ENCODE measurements at regions of chr14 and their contacts with region 1.

Region 1: DNA sequence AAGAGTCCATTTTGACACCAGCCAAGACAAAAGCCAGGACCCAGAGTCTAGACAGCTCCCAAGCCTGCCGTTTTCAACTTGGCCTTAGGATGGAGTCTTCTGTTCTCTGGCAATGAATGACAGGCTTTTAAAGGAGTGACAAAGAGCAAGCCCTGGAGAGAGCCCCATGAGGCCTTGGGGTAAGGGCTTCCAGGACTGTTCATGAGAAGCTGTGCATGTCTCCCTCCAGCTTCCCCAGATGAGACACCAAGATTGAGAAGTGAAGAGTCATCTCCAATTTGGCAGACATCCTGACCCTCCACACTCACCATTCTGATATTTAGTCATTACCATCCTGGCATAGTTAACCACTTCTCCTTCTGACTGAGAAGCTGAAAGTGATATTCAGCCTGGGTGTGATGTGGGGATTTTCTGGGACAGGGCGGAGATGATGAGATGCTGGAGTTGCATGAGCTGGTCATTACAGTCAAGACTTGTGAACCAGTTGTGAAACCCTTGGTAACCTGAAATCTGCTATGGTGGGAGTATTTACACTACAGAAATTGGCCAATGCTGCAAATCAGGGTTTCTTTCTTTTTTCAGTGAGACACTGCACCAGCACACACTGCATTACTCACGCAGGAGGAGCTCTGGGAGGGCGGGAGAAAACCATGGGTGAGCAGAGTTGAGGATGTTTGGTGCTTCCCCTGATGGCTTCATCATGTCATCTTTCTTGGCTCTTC is 77.8 kb downstream of the VCPKMT start:
- DNase-seq: peak; percentile 100
- H3K4me3 ChIP-seq: no peak overlapping the region
- H3K27ac ChIP-seq: peak overlapping the region; percentile 97
- H3K4me1 ChIP-seq: peaks cover 58% of the 10 kb centered on the region
- H3K27me3 ChIP-seq: no peaks in the 10 kb centered on the region
- CTCF ChIP-seq: peak; percentile 8 to 16

Region 2: DNA sequence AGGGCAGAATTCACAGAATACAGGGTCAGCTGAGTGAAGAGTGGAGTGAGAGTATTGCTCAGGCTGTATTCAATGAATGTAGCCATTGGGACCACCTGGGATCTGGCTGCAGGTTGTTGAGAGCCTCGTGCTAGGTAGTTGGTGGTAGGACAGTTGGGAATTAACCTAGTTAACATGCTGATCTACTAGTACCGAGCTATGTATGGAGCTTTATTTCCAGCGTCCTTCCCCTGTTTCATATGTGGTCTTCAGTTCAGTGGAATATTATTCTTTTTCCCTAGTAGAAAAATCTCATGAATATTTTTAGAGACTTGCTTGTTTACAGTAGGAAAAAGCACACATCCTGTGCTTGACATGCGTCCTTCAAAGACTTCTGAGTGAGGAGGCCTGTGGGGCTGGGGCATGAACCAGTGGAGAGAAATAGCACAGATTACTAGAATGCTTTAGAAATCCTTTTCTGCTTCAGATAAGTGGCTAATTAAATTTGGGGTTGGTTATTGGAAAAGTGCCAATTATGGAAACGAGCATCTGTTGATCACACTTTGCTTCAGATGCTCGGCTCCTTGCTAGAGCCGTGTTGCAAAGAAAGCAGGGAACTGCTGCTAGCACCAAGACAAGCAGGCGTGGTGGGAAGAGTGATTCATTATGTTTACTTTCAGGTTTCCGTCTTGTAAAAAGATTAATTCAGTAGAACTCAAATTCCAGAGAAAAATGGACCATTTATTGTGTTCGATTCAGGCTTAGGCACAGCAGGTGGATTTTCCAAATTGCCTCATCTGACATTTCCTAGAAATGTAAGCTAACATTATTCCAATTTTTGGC is 92.0 kb before region 1 on chr14:
- CTCF ChIA-PET with region 1: no interaction called
- dilution Hi-C with region 1: no loop called
- in situ Hi-C with region 1: no loop called
- intact Hi-C with region 1: loop called (anchors 1 kb)
- DNase-seq: peak; percentile 72
- H3K4me3 ChIP-seq: no peak overlapping the region
- H3K27ac ChIP-seq: no peak overlapping the region
- H3K4me1 ChIP-seq: peaks cover 30% of the 10 kb centered on the region
- H3K27me3 ChIP-seq: no peaks in the 10 kb centered on the region
- CTCF ChIP-seq: no peak

Region 3: DNA sequence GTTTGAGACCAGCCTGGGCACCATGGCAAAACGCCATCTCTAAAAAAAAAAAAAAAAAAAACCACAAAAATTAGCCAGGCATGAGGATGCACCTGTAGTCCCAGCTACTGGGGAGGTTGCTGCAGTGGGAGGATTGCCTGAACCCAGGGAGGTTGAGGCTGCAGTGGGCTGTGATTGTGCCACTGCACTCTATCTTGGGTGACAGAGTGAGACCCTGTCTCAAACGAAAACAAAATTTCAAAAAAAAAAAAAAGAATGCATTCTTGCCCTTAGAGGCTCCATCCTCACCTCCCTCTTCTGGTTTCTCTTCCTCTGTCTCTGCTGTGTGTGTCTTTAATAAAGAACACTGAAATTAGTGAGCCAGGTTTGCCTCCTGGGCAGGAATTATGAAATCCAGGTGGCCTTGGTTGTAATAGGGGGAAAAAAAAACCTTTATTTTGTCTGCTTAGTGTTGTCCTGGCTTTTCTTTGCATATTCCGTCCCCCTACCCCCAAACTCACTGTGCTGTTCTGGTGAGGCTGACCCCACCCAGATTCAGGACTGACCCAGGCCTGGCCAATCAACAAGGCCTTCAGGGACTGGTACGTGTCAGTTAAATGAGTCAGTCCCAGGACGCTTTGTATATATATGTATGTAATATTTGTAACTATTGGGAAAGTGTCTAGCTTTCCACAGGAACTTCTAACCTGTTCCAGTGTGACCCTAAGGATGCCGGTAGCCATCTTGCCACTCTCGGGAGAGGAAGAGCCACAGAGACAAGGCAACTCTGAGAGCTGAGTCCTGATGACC is 29.8 kb before region 1 on chr14:
- CTCF ChIA-PET with region 1: interaction called, 5 read pairs
- dilution Hi-C with region 1: no loop called
- in situ Hi-C with region 1: loop called in 1 of 2 experiments (anchors 5 kb)
- intact Hi-C with region 1: loop called (anchors 1 kb)
- DNase-seq: peak; percentile 94
- H3K4me3 ChIP-seq: no peak overlapping the region
- H3K27ac ChIP-seq: peak overlapping the region; percentile 96
- H3K4me1 ChIP-seq: peaks cover 55% of the 10 kb centered on the region
- H3K27me3 ChIP-seq: no peaks in the 10 kb centered on the region
- CTCF ChIP-seq: no peak

Region 4: GRCh38 chr14:50018933-50019210 is 19.7 kb before region 1 on chr14:
- CTCF ChIA-PET with region 1: no interaction called
- dilution Hi-C with region 1: no loop called
- in situ Hi-C with region 1: no loop called
- intact Hi-C with region 1: no loop called
- DNase-seq: no peak
- H3K4me3 ChIP-seq: no peak overlapping the region
- H3K27ac ChIP-seq: no peak overlapping the region
- H3K4me1 ChIP-seq: peaks cover 20% of the 10 kb centered on the region
- H3K27me3 ChIP-seq: no peaks in the 10 kb centered on the region
- CTCF ChIP-seq: no peak

Region 5: DNA sequence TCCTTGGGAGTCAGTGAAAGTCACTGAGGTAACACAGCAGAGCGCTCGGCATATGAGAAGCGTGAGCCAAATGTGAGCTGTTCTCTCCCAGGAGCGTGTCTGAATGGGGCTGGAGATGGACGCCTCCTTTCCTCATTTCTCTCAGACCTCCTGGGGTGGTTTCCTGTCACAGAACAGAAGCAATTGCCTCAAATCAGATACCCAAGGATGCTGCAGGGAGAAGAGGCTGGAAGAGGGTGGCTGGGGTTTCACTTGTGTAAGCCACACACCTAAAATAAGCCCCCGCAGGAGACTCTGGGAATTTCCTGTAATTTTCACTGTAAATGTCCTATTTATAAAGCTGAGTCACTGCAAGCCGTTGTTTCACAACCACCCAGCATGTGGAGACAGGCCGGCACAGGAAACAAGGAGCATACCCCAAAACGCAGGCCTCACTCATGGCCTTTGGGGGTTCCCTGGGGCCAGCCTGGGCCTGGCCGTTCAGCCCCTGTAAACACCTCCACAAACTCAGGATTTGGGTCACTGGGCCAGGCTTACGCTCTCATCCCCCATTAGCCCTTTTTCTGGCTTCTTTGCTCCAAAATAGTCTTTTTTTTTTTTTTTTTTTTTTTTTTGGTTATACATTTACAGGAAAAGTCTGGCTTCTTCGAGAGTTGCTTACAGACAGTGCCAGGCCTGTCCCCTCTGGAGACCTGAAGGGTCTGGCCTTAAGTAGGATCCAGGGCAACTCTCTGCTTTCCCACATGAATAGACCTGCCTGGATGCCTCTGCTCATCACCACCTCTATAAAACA is 22.5 kb after region 1 on chr14:
- CTCF ChIA-PET with region 1: interaction called, 8 read pairs
- dilution Hi-C with region 1: no loop called
- in situ Hi-C with region 1: no loop called
- intact Hi-C with region 1: loop called (anchors 1 kb)
- DNase-seq: peak; percentile 99
- H3K4me3 ChIP-seq: no peak overlapping the region
- H3K27ac ChIP-seq: peak overlapping the region; percentile 84
- H3K4me1 ChIP-seq: peaks cover 34% of the 10 kb centered on the region
- H3K27me3 ChIP-seq: no peaks in the 10 kb centered on the region
- CTCF ChIP-seq: peak in 1 of 2 donors; percentile 20

Region 6: DNA sequence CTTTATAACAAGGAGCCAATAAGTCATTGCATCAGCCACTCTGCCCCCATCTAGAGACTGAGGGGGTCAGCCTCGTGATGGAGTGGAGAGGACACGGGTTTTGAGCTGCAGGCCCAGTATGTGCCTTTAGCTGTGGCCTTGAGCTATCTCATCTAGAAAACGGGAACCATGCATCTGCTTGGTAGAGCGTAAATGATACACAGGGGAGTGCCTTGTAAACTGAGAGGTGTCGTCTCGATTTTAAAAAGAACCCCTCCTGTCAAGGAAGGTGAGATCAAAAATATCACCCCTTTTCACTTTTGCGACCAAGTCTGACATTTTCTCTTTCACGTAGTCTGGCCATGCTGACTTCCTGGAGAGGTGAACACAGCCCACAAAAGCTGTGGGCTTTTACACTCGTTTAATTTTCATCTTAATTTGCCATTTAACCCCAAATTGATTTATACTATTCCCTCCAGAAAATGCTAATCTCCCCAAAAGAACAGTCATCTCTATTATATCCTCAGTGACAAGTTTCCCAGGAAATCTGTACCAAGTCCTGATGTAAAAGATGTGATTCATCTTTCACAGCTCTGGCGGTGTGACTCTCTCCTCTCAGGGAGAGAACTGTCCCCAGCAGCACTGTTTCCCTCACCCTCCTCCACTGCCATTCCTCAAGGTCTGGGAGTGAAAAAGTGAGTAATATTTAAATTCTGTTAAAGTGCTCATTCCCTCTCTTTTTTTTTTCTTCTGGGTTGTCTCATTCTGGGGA is 47.2 kb after region 1 on chr14:
- CTCF ChIA-PET with region 1: interaction called, 5 read pairs
- dilution Hi-C with region 1: no loop called
- in situ Hi-C with region 1: no loop called
- intact Hi-C with region 1: loop called (anchors 1 kb)
- DNase-seq: peak; percentile 78
- H3K4me3 ChIP-seq: no peak overlapping the region
- H3K27ac ChIP-seq: no peak overlapping the region
- H3K4me1 ChIP-seq: peaks cover 30% of the 10 kb centered on the region
- H3K27me3 ChIP-seq: no peaks in the 10 kb centered on the region
- CTCF ChIP-seq: no peak

Region 7: DNA sequence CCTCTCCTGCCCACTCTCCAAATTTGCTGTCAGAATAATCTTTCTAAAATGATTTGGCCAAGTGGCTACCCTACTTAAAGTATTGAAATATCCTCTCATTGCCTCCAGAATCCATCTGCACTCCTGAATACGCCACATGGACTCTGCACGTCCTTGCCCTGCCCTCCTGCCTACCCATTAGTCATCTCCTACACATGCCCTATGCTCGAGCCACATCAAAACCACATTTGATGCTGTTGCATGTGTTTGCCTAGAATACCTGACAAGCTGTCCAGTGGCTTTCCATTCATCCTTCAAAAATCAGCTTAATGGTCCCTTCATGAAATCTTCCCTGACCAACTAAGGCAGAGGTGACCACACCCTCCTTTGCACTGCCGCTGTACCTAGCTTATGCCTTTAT is 60.8 kb after region 1 on chr14:
- CTCF ChIA-PET with region 1: no interaction called
- dilution Hi-C with region 1: no loop called
- in situ Hi-C with region 1: no loop called
- intact Hi-C with region 1: loop called (anchors 1 kb)
- DNase-seq: peak; percentile 86
- H3K4me3 ChIP-seq: no peak overlapping the region
- H3K27ac ChIP-seq: peak overlapping the region; percentile 23
- H3K4me1 ChIP-seq: peaks cover 16% of the 10 kb centered on the region
- H3K27me3 ChIP-seq: no peaks in the 10 kb centered on the region
- CTCF ChIP-seq: no peak

Region 8: DNA sequence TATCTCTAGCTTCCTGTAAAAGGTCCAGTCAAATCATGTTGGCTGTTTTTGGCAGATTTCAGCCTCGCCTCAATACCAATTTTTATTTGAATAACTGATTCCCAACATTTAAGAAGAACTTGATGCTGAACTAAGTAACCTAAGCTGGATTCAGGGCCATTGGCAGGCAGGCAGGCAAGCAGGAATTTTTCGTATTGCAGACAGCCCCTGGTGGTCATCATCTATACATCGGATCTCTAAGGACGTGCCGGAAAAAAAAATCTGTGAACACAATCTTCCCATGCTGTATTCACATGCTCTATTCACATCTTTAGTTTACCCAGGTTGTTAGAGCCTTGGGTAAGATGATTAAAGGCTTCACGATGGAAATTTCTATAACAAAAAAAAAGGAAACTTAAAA is 70.8 kb after region 1 on chr14:
- CTCF ChIA-PET with region 1: no interaction called
- dilution Hi-C with region 1: no loop called
- in situ Hi-C with region 1: no loop called
- intact Hi-C with region 1: no loop called
- DNase-seq: no peak
- H3K4me3 ChIP-seq: no peak overlapping the region
- H3K27ac ChIP-seq: no peak overlapping the region
- H3K4me1 ChIP-seq: peaks cover under 1% of the 10 kb centered on the region
- H3K27me3 ChIP-seq: no peaks in the 10 kb centered on the region
- CTCF ChIP-seq: peak; percentile 16 to 19

Region 9: GRCh38 chr14:50139192-50139591 is 100.6 kb after region 1 on chr14:
- CTCF ChIA-PET with region 1: no interaction called
- dilution Hi-C with region 1: no loop called
- in situ Hi-C with region 1: no loop called
- intact Hi-C with region 1: no loop called
- DNase-seq: no peak
- H3K4me3 ChIP-seq: no peak overlapping the region
- H3K27ac ChIP-seq: no peak overlapping the region
- H3K4me1 ChIP-seq: no peaks in the 10 kb centered on the region
- H3K27me3 ChIP-seq: no peaks in the 10 kb centered on the region
- CTCF ChIP-seq: no peak